ENCODE measurements at regions of chr11 and their contacts with region 1.

Region 1: GRCh38 chr11:9562728-9563115 is 10.7 kb upstream of the WEE1 start:
- DNase-seq: no peak
- H3K4me3 ChIP-seq: no peak overlapping the region
- H3K4me3 Mint-ChIP-seq: no peak overlapping the region
- H3K27ac ChIP-seq: no peak overlapping the region
- H3K27ac Mint-ChIP-seq: peak overlapping the region in 1 of 7 donors; percentile 56
- H3K4me1 ChIP-seq: no peaks in the 10 kb centered on the region
- H3K4me1 Mint-ChIP-seq: peaks cover 5% of the 10 kb centered on the region
- H3K27me3 ChIP-seq: no peaks in the 10 kb centered on the region
- H3K27me3 Mint-ChIP-seq: peaks cover 0 to 4% (median 3%) of the 10 kb centered on the region in 3 donors
- CTCF ChIP-seq: no peak

Region 2: GRCh38 chr11:9070749-9071476 is 491.8 kb before region 1 on chr11:
- intact Hi-C with region 1: loop called in 1 of 2 experiments (anchors 5 kb)
- DNase-seq: no peak
- H3K4me3 ChIP-seq: no peak overlapping the region
- H3K4me3 Mint-ChIP-seq: no peak overlapping the region
- H3K27ac ChIP-seq: no peak overlapping the region
- H3K27ac Mint-ChIP-seq: no peak overlapping the region
- H3K4me1 ChIP-seq: no peaks in the 10 kb centered on the region
- H3K4me1 Mint-ChIP-seq: peaks cover 8% of the 10 kb centered on the region
- H3K27me3 ChIP-seq: no peaks in the 10 kb centered on the region
- H3K27me3 Mint-ChIP-seq: peaks cover 6 to 9% (median 9%) of the 10 kb centered on the region in 3 donors
- CTCF ChIP-seq: no peak

Region 3: GRCh38 chr11:9259981-9260837 is 302.5 kb before region 1 on chr11:
- intact Hi-C with region 1: loop called in 1 of 2 experiments (anchors 5 kb)
- DNase-seq: no peak
- H3K4me3 ChIP-seq: no peak overlapping the region
- H3K4me3 Mint-ChIP-seq: no peak overlapping the region
- H3K27ac ChIP-seq: no peak overlapping the region
- H3K27ac Mint-ChIP-seq: peak overlapping the region in 4 of 7 donors; percentile 2 to 73 (median 14)
- H3K4me1 ChIP-seq: peaks cover 11 to 26% of the 10 kb centered on the region in 2 donors
- H3K4me1 Mint-ChIP-seq: peaks cover 35% of the 10 kb centered on the region
- H3K27me3 ChIP-seq: no peaks in the 10 kb centered on the region
- H3K27me3 Mint-ChIP-seq: no peaks in the 10 kb centered on the region
- CTCF ChIP-seq: peak; percentile 25

Region 4: DNA sequence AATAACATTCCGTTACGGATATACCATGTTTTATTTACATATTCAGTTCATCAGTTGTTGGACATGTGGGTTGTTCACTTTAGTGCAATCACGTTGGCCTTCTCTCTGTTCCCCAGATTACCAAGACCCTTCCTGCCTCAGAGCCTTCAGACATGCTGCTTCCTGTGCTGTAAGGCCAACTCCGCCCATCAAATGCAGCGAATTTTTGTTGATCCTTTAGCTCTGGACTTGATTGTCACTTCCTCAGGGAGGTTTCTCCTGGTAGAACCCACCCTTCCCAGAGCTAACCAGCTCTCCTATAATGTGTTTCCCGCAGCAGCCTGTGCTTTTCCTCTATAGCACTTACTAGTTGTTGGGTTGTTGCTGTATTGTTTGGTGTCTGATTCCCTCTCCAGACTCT is 140.6 kb after region 1 on chr11:
- intact Hi-C with region 1: no loop called
- DNase-seq: no peak
- H3K4me3 ChIP-seq: no peak overlapping the region
- H3K4me3 Mint-ChIP-seq: no peak overlapping the region
- H3K27ac ChIP-seq: no peak overlapping the region
- H3K27ac Mint-ChIP-seq: peak overlapping the region in 3 of 7 donors; percentile 47 to 85 (median 56)
- H3K4me1 ChIP-seq: peaks cover 7 to 14% of the 10 kb centered on the region in 2 donors
- H3K4me1 Mint-ChIP-seq: peaks cover 22% of the 10 kb centered on the region
- H3K27me3 ChIP-seq: no peaks in the 10 kb centered on the region
- H3K27me3 Mint-ChIP-seq: peaks cover 0 to 1% (median 0%) of the 10 kb centered on the region in 3 donors
- CTCF ChIP-seq: no peak